ENCODE measurements at regions of chr19 and their contacts with region 1.

Region 1: DNA sequence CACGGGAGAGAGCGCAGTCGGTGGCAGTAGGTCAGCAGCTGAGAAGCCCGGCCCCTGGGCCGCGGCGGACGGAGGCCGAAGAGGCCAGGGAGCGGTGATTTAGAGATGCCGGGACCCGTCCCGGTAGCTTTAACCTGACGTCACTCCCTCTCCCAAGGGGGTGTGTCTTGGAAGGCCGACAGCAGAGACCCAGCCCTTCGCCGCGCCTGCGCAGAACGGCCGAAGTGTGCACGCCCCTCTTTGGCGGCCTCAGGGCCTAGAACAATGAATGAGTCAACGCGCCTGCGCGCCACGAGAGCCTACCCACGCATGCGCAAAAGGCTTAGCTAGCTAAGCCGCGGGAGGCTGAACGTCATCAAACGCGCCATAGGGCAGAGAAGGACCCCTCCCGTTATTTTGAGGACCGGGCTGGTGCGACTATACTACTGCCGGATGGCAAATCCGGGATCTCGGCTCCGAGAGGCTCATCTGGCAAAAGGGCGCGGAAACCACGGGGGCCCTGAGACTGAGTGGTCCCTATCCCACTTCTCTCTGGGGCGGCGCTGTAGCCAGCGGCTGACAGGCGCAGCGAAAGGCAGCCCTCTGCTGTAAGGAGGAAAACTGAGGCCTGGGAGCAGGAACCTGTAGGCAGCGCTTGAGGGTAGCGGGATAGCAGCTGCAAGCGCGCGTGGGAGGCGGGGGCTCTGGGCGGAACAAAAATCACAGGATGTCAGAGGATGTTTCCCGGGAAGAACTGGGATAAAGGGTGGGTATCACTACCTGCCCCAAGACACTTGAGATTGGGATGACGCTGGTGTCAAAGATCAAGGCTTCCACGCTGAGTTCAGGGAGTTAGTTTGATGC is at the starts of genes IRGQ and ZNF576:
- DNase-seq: peak; percentile 100
- H3K4me3 ChIP-seq: peak within 1 kb of the TSS; percentile 67 to 80
- H3K27ac ChIP-seq: peak within 1 kb of the TSS; percentile 93 to 96
- H3K4me1 ChIP-seq: peaks cover 0 to 47% (median 38%) of the 10 kb centered on the region in 4 donors
- H3K27me3 ChIP-seq: no peaks in the 10 kb centered on the region
- CTCF ChIP-seq: peak in 1 of 2 experiments; percentile 30

Region 2: DNA sequence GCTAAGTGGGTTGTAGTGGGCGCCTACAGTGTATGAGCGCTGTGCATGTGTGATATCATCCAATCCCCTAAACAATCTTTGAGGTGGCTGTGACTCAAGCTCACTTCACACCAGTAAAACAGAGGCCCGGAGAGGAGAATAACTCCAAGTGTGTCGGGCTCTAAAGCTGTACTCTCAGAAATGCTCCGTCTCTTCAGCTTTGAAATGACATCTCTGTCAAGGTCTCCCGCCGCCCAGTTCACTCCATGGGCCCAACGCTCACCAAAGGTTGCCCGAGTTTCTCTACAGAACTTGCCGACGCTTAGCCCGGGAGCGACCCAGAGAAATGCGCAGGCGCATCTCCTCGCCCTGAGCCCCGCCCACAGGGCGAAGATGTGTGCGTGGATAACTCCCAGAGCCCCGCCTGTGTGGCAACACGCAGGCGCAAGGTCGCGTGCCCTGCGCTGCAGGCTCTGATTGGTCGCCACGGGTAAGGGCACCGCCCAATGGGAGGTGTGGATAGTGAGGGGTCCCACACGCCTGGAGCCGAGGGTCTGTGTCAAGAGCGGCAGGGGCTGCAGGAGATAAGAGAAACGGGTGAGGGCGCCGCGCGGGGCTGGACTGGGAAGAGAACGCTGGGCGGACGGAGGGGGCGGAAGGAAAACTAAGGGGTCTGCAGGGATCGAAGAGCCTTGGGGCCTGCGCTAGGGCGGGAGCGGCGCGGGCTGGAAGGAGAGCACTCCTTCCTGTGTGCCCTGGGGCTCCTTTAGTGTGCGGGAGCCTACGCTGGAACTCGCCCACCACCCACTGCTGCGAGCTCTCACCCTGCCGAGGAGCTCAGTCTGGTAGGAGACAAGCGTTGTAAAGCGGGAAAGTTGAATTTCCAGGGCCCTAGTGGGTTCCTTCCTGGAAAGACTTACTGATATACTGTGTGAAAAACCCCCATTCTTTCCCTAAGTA is 1376.1 kb before region 1 on chr19 and contains the start of gene ZNF526:
- intact Hi-C with region 1: no loop called
- DNase-seq: peak; percentile 98
- H3K4me3 ChIP-seq: peak within 1 kb of the TSS; percentile 85 to 86
- H3K27ac ChIP-seq: peak within 1 kb of the TSS; percentile 79 to 88
- H3K4me1 ChIP-seq: peaks cover 0 to 54% (median 41%) of the 10 kb centered on the region in 4 donors
- H3K27me3 ChIP-seq: no peaks in the 10 kb centered on the region
- CTCF ChIP-seq: no peak

Region 3: DNA sequence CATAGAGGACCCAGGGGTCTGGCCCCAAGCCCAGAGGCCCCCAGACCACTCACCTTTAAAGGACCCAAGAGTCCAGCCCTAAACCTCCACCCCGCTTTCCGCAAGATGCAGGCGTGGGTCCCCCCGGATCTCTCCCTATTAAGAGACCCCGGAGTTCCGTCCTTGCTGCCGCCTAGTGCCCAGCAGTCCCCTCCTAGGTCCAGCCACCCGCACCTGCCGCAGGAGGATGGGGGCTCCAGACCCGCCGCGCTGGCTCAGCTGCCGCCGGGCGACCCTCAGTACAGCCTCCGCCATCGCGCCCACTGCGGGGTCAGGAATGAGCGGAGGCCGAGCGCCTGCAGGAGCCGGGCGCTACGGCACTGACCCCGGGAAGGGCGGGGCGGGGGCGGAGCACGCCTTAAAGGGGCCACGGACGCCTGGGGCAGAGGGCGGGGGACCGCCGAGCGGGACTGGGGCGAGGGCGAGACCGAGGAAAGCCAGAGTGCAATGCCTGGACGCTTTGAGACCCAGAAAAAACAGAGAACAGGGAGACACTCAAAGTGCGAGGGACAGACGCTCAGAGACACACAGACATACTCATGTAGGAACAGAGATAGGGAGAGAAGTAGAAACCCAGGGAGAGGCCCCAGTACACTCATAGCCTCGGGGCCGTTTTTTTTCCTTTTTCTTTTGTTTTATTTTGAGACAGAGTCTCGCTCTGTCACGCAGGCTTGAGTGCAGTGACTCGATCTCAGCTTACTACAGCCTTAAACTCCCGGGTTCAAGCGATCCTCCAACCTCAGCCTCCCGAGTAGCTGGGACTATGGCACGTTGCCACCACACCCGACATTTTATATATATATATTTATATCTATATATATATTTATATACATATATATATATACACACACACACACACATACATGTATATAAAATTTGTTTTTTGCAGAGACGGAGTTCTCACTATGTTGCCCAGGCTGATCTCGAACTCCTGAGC is 69.0 kb before region 1 on chr19 and contains the start of gene ETHE1:
- intact Hi-C with region 1: loop called (anchors 5 kb)
- DNase-seq: peak; percentile 83 to 92
- H3K4me3 ChIP-seq: peak within 1 kb of the TSS; percentile 92 to 94
- H3K27ac ChIP-seq: peak within 1 kb of the TSS; percentile 87 to 91
- H3K4me1 ChIP-seq: peaks cover 0 to 31% (median 18%) of the 10 kb centered on the region in 4 donors
- H3K27me3 ChIP-seq: no peaks in the 10 kb centered on the region
- CTCF ChIP-seq: no peak

Region 4: GRCh38 chr19:43575156-43575950 is 20.9 kb before region 1 on chr19 and contains the starts of genes PINLYP and XRCC1:
- intact Hi-C with region 1: loop called (anchors 1 kb)
- DNase-seq: peak; percentile 98 to 99
- H3K4me3 ChIP-seq: peak within 1 kb of the TSS; percentile 76 to 77
- H3K27ac ChIP-seq: peak within 1 kb of the TSS; percentile 77 to 87
- H3K4me1 ChIP-seq: peaks cover 0 to 21% (median 10%) of the 10 kb centered on the region in 4 donors
- H3K27me3 ChIP-seq: no peaks in the 10 kb centered on the region
- CTCF ChIP-seq: no peak

Region 5: DNA sequence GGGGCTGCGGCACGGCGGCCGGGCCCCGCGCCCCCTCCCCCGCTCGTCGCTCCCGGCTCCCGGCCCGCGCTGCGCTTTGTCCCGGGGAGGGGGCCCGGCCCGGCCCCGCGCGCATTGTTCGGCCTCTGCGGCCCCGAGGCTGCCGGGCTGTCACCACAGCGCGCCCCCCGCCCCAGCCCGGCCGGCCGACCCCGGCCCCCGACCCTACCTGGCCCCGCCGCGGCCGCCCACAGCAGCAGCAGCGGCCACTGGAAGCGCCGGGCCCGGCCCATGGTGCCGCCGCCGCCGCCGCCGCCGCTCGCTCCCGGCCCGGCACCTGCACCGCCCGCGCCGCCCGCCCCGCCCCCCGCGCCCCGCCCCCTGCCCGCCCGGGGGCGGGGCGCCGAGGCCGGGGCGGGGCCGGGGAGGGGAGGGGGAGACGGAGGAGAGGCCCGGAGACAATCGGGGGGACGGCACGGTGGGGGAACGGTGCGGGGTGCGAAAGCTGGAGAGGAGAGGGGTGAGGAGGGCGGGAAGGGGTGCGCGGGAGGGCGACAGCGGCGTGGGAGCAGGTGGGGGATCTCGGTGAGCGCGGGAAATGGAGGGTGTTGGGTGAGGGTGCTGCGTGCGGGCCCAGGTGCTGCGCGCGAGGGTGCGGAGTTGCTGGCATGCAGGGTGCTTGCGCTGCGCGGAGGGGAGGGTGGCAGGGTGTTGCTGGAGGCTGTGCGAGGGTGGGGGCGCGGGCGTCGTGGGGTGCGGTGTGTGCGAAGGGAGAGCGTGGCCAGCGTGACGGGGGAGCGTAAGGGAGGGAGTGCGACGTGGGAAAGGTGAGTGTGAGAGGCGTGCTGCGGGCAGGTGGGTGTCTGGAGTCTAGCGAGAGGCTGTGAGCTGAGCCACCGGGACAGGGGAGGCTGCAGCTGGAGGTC is 43.6 kb after region 1 on chr19 and contains the start of gene CADM4:
- intact Hi-C with region 1: no loop called
- DNase-seq: no peak
- H3K4me3 ChIP-seq: peak within 1 kb of the TSS; percentile 36 to 50
- H3K27ac ChIP-seq: no peak within 1 kb of the TSS
- H3K4me1 ChIP-seq: peaks cover 0 to 16% (median 11%) of the 10 kb centered on the region in 4 donors
- H3K27me3 ChIP-seq: peaks cover 0 to 58% of the 10 kb centered on the region in 2 donors
- CTCF ChIP-seq: no peak